ENCODE measurements at regions of chr10 and their contacts with region 1.

Region 1: GRCh38 chr10:122435212-122435827 is 19.1 kb upstream of the ARMS2 start:
- DNase-seq: peak in 3 of 9 experiments; percentile 19 to 73 (median 63)
- ATAC-seq: peak; percentile 54
- H3K4me3 ChIP-seq: no peak overlapping the region
- H3K4me3 Mint-ChIP-seq: no peak overlapping the region
- H3K27ac ChIP-seq: no peak overlapping the region
- H3K27ac Mint-ChIP-seq: no peak overlapping the region
- H3K4me1 ChIP-seq: no peaks in the 10 kb centered on the region
- H3K4me1 Mint-ChIP-seq: no peaks in the 10 kb centered on the region
- H3K27me3 ChIP-seq: no peaks in the 10 kb centered on the region
- H3K27me3 Mint-ChIP-seq: no peaks in the 10 kb centered on the region
- CTCF ChIP-seq: peak; percentile 90

Region 2: GRCh38 chr10:122258136-122259074 is 176.9 kb before region 1 on chr10:
- CTCF ChIA-PET with region 1: no interaction called
- POLR2A ChIA-PET with region 1: no interaction called
- intact Hi-C with region 1: no loop called
- DNase-seq: no peak
- ATAC-seq: no peak
- H3K4me3 ChIP-seq: no peak overlapping the region
- H3K4me3 Mint-ChIP-seq: no peak overlapping the region
- H3K27ac ChIP-seq: no peak overlapping the region
- H3K27ac Mint-ChIP-seq: no peak overlapping the region
- H3K4me1 ChIP-seq: no peaks in the 10 kb centered on the region
- H3K4me1 Mint-ChIP-seq: no peaks in the 10 kb centered on the region
- H3K27me3 ChIP-seq: no peaks in the 10 kb centered on the region
- H3K27me3 Mint-ChIP-seq: peaks cover 12% of the 10 kb centered on the region
- CTCF ChIP-seq: no peak

Region 3: GRCh38 chr10:122298598-122299301 is 136.6 kb before region 1 on chr10:
- CTCF ChIA-PET with region 1: interaction called, 50 read pairs
- POLR2A ChIA-PET with region 1: no interaction called
- intact Hi-C with region 1: loop called (anchors 1 kb)
- DNase-seq: peak; percentile 44 to 79 (median 67)
- ATAC-seq: peak; percentile 86
- H3K4me3 ChIP-seq: no peak overlapping the region
- H3K4me3 Mint-ChIP-seq: no peak overlapping the region
- H3K27ac ChIP-seq: no peak overlapping the region
- H3K27ac Mint-ChIP-seq: no peak overlapping the region
- H3K4me1 ChIP-seq: peaks cover 10% of the 10 kb centered on the region
- H3K4me1 Mint-ChIP-seq: peaks cover 10% of the 10 kb centered on the region
- H3K27me3 ChIP-seq: no peaks in the 10 kb centered on the region
- H3K27me3 Mint-ChIP-seq: peaks cover 2% of the 10 kb centered on the region
- CTCF ChIP-seq: peak; percentile 85

Region 4: GRCh38 chr10:122348512-122348911 is 86.8 kb before region 1 on chr10:
- CTCF ChIA-PET with region 1: interaction called, 200 read pairs
- POLR2A ChIA-PET with region 1: interaction called, 4 read pairs
- intact Hi-C with region 1: no loop called
- DNase-seq: no peak
- ATAC-seq: no peak
- H3K4me3 ChIP-seq: no peak overlapping the region
- H3K4me3 Mint-ChIP-seq: no peak overlapping the region
- H3K27ac ChIP-seq: no peak overlapping the region
- H3K27ac Mint-ChIP-seq: no peak overlapping the region
- H3K4me1 ChIP-seq: no peaks in the 10 kb centered on the region
- H3K4me1 Mint-ChIP-seq: no peaks in the 10 kb centered on the region
- H3K27me3 ChIP-seq: no peaks in the 10 kb centered on the region
- H3K27me3 Mint-ChIP-seq: no peaks in the 10 kb centered on the region
- CTCF ChIP-seq: no peak

Region 5: DNA sequence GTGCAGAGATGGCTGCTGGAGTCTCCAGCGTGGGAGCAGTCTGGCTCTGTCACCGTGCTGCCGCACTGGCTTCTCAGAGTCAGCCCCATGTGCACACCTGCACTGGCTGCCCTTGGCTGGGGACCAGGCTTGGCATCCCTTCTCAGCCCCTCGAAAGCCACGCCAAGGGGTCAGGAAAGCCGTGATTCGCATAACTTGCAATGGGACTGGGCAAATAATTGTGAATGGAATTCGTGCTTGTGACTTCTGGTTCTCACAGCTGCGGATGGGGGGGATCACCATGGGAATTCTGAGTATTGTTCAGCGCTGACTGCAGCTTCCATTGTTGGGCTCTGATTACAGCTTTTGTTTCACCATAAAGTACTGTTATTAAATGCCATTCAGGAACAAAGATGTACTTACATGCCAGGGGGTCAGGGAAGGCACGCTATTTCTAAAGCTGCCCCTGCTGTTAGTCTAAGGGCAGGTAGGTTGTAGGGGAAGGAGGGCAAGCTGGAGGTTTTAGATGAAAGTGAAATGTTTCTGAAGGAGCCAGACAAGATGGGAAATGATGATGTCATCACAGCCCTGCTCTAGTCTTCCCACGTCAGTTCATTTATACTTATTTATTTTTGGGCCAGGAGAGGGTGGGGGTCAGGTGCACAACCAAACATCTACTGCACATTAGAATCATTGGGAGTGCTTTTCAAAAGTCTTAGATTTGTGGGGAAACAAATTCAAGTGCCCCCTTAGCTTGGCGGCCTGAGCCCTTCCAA is 66.6 kb before region 1 on chr10:
- CTCF ChIA-PET with region 1: interaction called, 27 read pairs
- POLR2A ChIA-PET with region 1: interaction called, 16 read pairs
- intact Hi-C with region 1: no loop called
- DNase-seq: no peak
- ATAC-seq: no peak
- H3K4me3 ChIP-seq: no peak overlapping the region
- H3K4me3 Mint-ChIP-seq: no peak overlapping the region
- H3K27ac ChIP-seq: no peak overlapping the region
- H3K27ac Mint-ChIP-seq: no peak overlapping the region
- H3K4me1 ChIP-seq: peaks cover 4% of the 10 kb centered on the region
- H3K4me1 Mint-ChIP-seq: peaks cover 5% of the 10 kb centered on the region
- H3K27me3 ChIP-seq: no peaks in the 10 kb centered on the region
- H3K27me3 Mint-ChIP-seq: peaks cover 13% of the 10 kb centered on the region
- CTCF ChIP-seq: no peak

Region 6: DNA sequence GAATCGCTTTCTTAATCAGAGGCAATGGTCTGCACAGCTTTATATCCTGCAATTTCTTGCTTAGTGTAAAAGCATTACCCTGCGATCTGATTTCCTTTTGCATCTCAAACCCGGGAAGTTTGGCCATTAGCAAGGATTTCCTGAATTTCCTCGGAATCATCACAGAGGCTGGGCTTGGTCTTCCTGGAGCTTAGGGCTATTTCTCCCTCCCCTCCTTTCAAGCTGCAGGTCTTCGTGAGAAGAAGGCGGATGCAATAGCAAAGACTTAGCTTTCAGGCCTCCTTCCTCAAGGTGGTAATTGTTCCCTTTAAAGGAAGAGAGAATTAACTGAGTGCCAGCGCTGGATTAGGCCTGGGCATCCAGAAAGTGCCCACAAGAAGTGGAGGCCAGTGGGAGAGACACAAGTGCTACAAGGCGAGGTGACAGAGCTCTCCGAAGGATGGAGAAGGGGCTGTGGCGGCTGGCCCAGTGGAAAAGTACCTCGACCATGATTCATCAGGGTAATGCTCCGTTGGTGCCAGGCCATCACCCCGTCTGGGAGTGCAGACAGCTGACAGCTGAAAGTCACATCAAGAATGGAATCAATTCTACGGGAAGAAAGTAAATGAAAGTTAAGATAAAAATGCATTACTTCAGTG is 15.2 kb after region 1 on chr10:
- CTCF ChIA-PET with region 1: interaction called, 12 read pairs
- POLR2A ChIA-PET with region 1: interaction called, 3 read pairs
- intact Hi-C with region 1: no loop called
- DNase-seq: no peak
- ATAC-seq: no peak
- H3K4me3 ChIP-seq: no peak overlapping the region
- H3K4me3 Mint-ChIP-seq: no peak overlapping the region
- H3K27ac ChIP-seq: no peak overlapping the region
- H3K27ac Mint-ChIP-seq: no peak overlapping the region
- H3K4me1 ChIP-seq: no peaks in the 10 kb centered on the region
- H3K4me1 Mint-ChIP-seq: no peaks in the 10 kb centered on the region
- H3K27me3 ChIP-seq: peaks cover 0 to 3% of the 10 kb centered on the region in 2 experiments
- H3K27me3 Mint-ChIP-seq: peaks cover 21% of the 10 kb centered on the region
- CTCF ChIP-seq: no peak